ENCODE measurements at regions of chr3 and their contacts with region 1.

Region 1: DNA sequence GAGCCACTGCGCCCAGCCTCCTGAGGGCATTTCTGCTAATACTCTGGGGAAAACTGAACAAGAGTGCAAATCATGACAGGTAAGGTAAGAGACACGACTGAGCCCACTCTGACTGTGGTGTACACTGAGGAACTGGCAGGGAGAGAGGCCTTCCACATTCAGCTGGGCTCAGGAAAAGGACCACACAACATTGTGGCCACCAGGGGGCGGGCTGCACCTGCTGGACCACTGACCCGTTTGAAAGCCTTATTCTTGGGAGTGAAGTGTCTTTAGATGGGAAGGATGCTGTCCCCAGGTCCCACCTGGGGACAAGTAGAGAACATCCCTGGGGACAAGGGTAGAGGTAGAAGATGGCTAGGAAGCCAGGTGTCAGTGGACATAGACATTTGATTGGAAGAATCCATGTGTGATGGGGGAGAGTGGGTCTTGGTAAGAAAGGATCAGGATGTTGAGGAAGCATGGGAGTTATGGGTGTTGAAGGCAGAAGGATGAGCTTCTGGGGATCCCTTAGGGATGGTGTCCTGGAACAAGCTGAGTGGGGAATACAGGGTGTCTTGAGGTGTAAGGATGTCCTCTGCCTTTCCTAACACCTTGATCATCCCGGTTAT is 6.2 kb upstream of the CTDSPL start:
- DNase-seq: peak; percentile 79
- H3K4me3 Mint-ChIP-seq: no peak overlapping the region
- H3K27ac Mint-ChIP-seq: no peak overlapping the region
- H3K4me1 Mint-ChIP-seq: peaks cover 29% of the 10 kb centered on the region
- H3K27me3 Mint-ChIP-seq: no peaks in the 10 kb centered on the region
- CTCF ChIP-seq: peak; percentile 94

Region 2: DNA sequence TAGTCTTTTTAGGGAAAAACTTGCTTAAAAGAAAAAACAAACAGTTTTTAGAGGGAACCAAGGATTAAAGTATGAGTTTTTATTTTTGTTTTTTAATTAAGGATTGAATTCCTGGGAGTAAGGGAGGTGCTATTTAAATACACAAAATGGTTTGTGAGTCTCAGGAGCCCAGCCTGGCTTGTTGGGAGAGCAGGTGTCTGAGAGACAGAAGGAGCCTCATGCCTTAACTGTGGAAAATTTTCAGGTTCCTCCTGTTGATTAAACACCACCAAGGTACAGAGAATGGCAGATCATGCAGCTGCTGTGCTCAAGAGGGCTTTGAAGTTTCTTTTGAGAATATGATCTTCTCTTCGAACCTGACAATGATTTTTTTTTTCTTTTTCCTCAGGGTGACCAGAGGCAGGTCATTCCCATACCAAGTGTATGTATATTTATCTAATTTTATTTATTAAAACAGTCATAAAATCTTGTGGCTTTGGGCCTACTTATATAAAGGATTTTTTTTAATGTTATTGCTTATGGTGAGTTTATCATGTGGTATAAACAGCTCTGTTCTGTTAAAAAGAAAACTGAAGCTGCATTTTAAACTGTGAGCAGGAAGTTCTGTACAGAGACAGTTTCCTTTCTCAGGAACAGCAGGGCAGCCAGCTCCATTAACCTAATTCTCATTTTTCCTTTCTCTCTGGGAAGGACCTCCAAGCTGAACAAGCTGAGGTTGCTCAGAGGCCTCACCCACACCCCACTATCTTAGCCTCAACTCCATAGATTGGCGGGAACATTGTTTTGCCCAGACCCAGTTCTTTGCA is 101.5 kb after region 1 on chr3:
- CTCF ChIA-PET with region 1: interaction called, 24 read pairs
- POLR2A ChIA-PET with region 1: no interaction called
- intact Hi-C with region 1: no loop called
- DNase-seq: no peak
- H3K4me3 Mint-ChIP-seq: no peak overlapping the region
- H3K27ac Mint-ChIP-seq: peak overlapping the region; percentile 46
- H3K4me1 Mint-ChIP-seq: no peaks in the 10 kb centered on the region
- H3K27me3 Mint-ChIP-seq: no peaks in the 10 kb centered on the region
- CTCF ChIP-seq: no peak

Region 3: GRCh38 chr3:37974121-37975083 is 118.9 kb after region 1 on chr3:
- CTCF ChIA-PET with region 1: interaction called, 207 read pairs
- POLR2A ChIA-PET with region 1: interaction called, 6 read pairs
- intact Hi-C with region 1: no loop called
- DNase-seq: peak; percentile 68
- H3K4me3 Mint-ChIP-seq: no peak overlapping the region
- H3K27ac Mint-ChIP-seq: peak overlapping the region; percentile 12
- H3K4me1 Mint-ChIP-seq: peaks cover 10% of the 10 kb centered on the region
- H3K27me3 Mint-ChIP-seq: no peaks in the 10 kb centered on the region
- CTCF ChIP-seq: peak; percentile 58

Region 4: DNA sequence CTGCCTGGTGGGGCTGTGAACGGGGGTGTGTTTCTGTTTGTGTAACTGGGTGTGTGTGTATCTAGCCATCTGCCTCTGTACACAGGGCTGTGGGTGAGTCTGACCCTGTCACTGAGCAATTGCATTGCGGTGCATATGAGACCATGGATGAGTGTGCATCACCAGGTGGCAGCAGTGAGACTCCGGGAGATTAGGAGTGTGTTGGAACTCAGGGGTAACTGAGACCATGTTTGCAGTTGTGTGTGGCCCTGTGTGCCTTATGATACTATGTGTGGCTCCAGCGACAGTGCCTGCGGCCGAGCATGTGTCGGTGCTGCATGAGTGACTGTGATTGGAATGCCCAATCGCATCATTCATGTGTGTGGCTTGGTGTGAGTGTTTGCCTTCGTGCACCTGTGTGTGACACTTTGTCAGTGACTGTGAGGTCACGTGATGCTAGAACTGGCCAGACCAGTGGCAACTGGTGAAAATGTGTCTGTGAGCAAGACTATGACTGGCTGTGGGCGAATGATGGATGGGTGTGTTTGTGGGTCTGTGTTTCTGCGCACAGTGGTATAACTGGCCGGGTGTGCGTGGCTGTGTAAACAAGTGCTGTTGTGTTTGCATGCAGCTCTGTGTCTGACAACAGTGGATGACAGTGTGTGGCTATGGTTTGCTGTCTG is 149.1 kb after region 1 on chr3:
- CTCF ChIA-PET with region 1: interaction called, 43 read pairs
- POLR2A ChIA-PET with region 1: no interaction called
- intact Hi-C with region 1: no loop called
- DNase-seq: peak; percentile 81
- H3K4me3 Mint-ChIP-seq: no peak overlapping the region
- H3K27ac Mint-ChIP-seq: no peak overlapping the region
- H3K4me1 Mint-ChIP-seq: peaks cover 23% of the 10 kb centered on the region
- H3K27me3 Mint-ChIP-seq: no peaks in the 10 kb centered on the region
- CTCF ChIP-seq: peak; percentile 69